Activated B cell treated with CpG ODN at 0.5 μM for 24 hours (primary cell): ENCODE measurements at regions of chr15 and their contacts with region 1.

Region 1: DNA sequence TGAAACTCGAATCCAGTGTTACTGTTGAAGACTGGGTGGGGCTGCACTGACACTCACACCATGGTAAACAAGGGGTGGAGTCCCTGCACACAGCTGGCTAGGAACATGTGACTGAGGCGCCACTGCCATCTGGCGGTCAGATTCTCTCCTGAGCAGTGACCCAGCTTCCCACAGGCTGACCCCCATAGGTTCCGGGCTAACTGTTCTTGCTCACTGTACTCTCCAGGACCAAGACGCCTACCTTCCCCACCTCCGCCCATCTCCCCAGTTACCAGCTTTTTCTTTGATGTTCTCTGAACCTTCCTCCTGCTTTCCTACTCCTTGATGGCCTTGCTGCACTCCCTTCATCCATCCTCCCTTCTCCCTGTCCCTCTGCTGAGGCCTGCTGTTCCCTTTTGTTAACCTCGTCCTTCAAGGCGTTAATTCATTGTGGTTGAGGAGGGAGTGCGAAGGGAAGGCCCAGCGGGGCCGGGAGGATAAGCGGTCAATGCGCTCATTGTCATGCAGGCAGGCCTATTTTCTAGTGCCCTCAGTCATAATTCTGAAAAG is 115.2 kb downstream of the ATP8B4 start:
- DNase-seq: peak; percentile 20
- ATAC-seq: peak; percentile 88
- H3K4me3 Mint-ChIP-seq: no peak overlapping the region
- H3K27ac Mint-ChIP-seq: no peak overlapping the region
- H3K4me1 Mint-ChIP-seq: peaks cover 11% of the 10 kb centered on the region
- H3K27me3 Mint-ChIP-seq: no peaks in the 10 kb centered on the region
- CTCF ChIP-seq: no peak

Region 2: GRCh38 chr15:49471733-49472132 is 532.1 kb before region 1 on chr15:
- CTCF ChIA-PET with region 1: interaction called, 3 read pairs
- POLR2A ChIA-PET with region 1: no interaction called
- intact Hi-C with region 1: loop called (anchors 2 kb)
- DNase-seq: no peak
- ATAC-seq: no peak
- H3K4me3 Mint-ChIP-seq: no peak overlapping the region
- H3K27ac Mint-ChIP-seq: no peak overlapping the region
- H3K4me1 Mint-ChIP-seq: no peaks in the 10 kb centered on the region
- H3K27me3 Mint-ChIP-seq: no peaks in the 10 kb centered on the region
- CTCF ChIP-seq: no peak

Region 3: DNA sequence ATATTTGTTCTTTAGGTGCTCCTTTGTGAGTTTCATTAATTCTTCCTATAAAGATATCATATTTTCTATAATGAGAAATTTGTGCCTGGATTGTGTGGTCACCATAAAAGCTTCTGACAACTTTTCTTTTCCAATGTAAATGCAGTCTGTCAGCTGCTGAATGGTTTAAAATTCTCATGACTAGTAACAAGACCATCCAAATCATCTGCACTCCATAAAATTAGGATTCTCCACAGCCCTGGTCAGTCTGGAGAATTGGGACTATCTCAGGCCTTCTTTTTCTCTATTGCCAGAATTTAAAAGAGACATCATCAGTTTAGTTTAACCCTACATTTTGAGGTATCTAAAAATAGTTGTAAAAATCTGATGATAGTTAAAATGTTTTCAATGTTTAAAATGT is 202.1 kb before region 1 on chr15:
- CTCF ChIA-PET with region 1: no interaction called
- POLR2A ChIA-PET with region 1: no interaction called
- intact Hi-C with region 1: no loop called
- DNase-seq: no peak
- ATAC-seq: no peak
- H3K4me3 Mint-ChIP-seq: no peak overlapping the region
- H3K27ac Mint-ChIP-seq: no peak overlapping the region
- H3K4me1 Mint-ChIP-seq: no peaks in the 10 kb centered on the region
- H3K27me3 Mint-ChIP-seq: peaks cover 2% of the 10 kb centered on the region
- CTCF ChIP-seq: no peak

Region 4: DNA sequence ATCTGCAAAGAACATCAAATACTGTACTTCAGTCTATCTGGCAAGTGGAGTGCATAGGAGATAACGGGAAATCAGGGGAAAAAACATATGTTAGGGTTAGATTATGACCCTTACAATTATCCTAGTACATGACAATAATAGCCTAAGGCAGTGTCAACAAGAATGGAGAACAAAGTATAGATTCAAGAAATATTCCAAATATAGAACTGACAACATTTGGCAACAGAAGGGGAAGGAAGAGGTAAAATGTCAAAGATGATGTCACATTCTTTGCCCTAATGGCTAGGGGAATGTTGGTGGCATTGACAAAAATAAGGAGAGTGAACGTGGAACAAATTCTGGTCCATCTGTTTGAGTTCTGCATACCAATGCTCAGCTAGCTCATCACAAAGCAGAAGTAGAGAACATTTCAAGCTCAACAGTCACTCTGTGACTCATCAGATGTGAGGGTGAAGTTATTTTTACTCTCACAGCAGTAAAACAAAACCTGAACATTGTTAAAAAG is 130.7 kb after region 1 on chr15:
- CTCF ChIA-PET with region 1: no interaction called
- POLR2A ChIA-PET with region 1: no interaction called
- intact Hi-C with region 1: loop called (anchors 10 kb)
- DNase-seq: no peak
- ATAC-seq: peak; percentile 66
- H3K4me3 Mint-ChIP-seq: no peak overlapping the region
- H3K27ac Mint-ChIP-seq: peak overlapping the region; percentile 71
- H3K4me1 Mint-ChIP-seq: peaks cover 25% of the 10 kb centered on the region
- H3K27me3 Mint-ChIP-seq: no peaks in the 10 kb centered on the region
- CTCF ChIP-seq: no peak